ENCODE measurements at regions of chr1 and their contacts with region 1.

Region 1: GRCh38 chr1:77683160-77684148 is 996 bp upstream of the ZZZ3 start:
- DNase-seq: peak; percentile 89
- ATAC-seq: peak; percentile 88
- H3K4me3 ChIP-seq: peak overlapping the region; percentile 80
- H3K27ac ChIP-seq: peak overlapping the region; percentile 97
- H3K4me1 ChIP-seq: no peaks in the 10 kb centered on the region; the same call in 1 of the 2 replicates
- H3K27me3 ChIP-seq: no peaks in the 10 kb centered on the region
- CTCF ChIP-seq: peak; percentile 89
- POLR2A ChIP-seq: 0 out of 2 replicates have a peak, but pooled peaks have one; percentile 17
- RAD21 ChIP-seq: peak; percentile 73

Region 2: GRCh38 chr1:77143529-77144121 is 539.8 kb before region 1 on chr1:
- CTCF ChIA-PET with region 1: no interaction called
- POLR2A ChIA-PET with region 1: no interaction called
- dilution Hi-C with region 1: no loop called
- in situ Hi-C with region 1: no loop called
- intact Hi-C with region 1: loop called (anchors 1 kb)
- DNase-seq: peak; percentile 1
- ATAC-seq: no peak
- H3K4me3 ChIP-seq: no peak overlapping the region
- H3K27ac ChIP-seq: no peak overlapping the region
- H3K4me1 ChIP-seq: no peaks in the 10 kb centered on the region
- H3K27me3 ChIP-seq: no peaks in the 10 kb centered on the region
- CTCF ChIP-seq: peak; percentile 45
- POLR2A ChIP-seq: no peak
- RAD21 ChIP-seq: peak; percentile 43

Region 3: DNA sequence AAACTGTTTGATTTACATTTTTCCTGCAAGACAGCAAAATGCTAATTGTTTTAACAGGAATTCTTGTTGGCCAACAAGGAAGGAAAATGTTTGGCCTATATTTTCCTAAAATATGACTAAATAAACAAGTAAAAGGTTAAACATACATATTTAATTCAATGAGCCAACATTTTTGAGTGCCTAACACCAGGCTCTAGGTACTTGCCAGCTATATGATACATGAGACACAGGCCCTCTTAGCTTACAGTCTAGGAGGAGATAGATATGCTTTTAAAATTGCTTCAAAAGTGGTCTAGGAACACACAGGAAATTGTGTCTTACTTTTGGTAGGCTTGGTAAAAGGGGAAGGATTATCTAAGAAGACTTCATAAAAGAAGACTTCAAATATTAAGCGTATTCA is 515.1 kb before region 1 on chr1:
- CTCF ChIA-PET with region 1: no interaction called
- POLR2A ChIA-PET with region 1: no interaction called
- dilution Hi-C with region 1: no loop called
- in situ Hi-C with region 1: no loop called
- intact Hi-C with region 1: loop called (anchors 5 kb)
- DNase-seq: peak; percentile 6
- ATAC-seq: peak; percentile 65
- H3K4me3 ChIP-seq: no peak overlapping the region
- H3K27ac ChIP-seq: no peak overlapping the region
- H3K4me1 ChIP-seq: no peaks in the 10 kb centered on the region
- H3K27me3 ChIP-seq: no peaks in the 10 kb centered on the region
- CTCF ChIP-seq: no peak
- POLR2A ChIP-seq: no peak
- RAD21 ChIP-seq: no peak

Region 4: GRCh38 chr1:77281491-77282186 is 401.8 kb before region 1 on chr1 and contains the start of gene AK5:
- CTCF ChIA-PET with region 1: no interaction called
- POLR2A ChIA-PET with region 1: no interaction called
- dilution Hi-C with region 1: no loop called
- in situ Hi-C with region 1: no loop called
- intact Hi-C with region 1: loop called (anchors 5 kb)
- DNase-seq: peak; percentile 48
- ATAC-seq: peak; percentile 92
- H3K4me3 ChIP-seq: peak within 1 kb of the TSS; percentile 91
- H3K27ac ChIP-seq: peak within 1 kb of the TSS; percentile 56
- H3K4me1 ChIP-seq: 0 out of 2 replicates have a peak, but pooled peaks cover 2% of the 10 kb centered on the region
- H3K27me3 ChIP-seq: no peaks in the 10 kb centered on the region
- CTCF ChIP-seq: no peak
- POLR2A ChIP-seq: no peak
- RAD21 ChIP-seq: no peak
- total RNA-seq, gene AK5: 25.8 and 54.7 TPM in 2 replicates

Region 5: GRCh38 chr1:77664939-77665516 is 18.4 kb before region 1 on chr1:
- CTCF ChIA-PET with region 1: no interaction called
- POLR2A ChIA-PET with region 1: interaction called, 9 read pairs
- dilution Hi-C with region 1: no loop called
- in situ Hi-C with region 1: no loop called
- intact Hi-C with region 1: loop called (anchors 1 kb)
- DNase-seq: no peak
- ATAC-seq: no peak
- H3K4me3 ChIP-seq: no peak overlapping the region
- H3K27ac ChIP-seq: no peak overlapping the region
- H3K4me1 ChIP-seq: peaks cover 4% of the 10 kb centered on the region; the same call in 1 of the 2 replicates
- H3K27me3 ChIP-seq: no peaks in the 10 kb centered on the region
- CTCF ChIP-seq: no peak
- POLR2A ChIP-seq: no peak
- RAD21 ChIP-seq: no peak

Measured in IMR-90 (cell line).